PC-3 (cell line): ENCODE measurements at regions of chr16 and their contacts with region 1.

Region 1: GRCh38 chr16:27109666-27110523 is 43.2 kb downstream of the C16orf82 start:
- DNase-seq: peak; percentile 67
- ATAC-seq: peak; percentile 78
- H3K4me3 ChIP-seq: peak overlapping the region; percentile 62
- H3K27ac ChIP-seq: no peak overlapping the region
- H3K4me1 ChIP-seq: no peaks in the 10 kb centered on the region
- H3K27me3 ChIP-seq: no peaks in the 10 kb centered on the region
- CTCF ChIP-seq: peak; percentile 54

Region 2: DNA sequence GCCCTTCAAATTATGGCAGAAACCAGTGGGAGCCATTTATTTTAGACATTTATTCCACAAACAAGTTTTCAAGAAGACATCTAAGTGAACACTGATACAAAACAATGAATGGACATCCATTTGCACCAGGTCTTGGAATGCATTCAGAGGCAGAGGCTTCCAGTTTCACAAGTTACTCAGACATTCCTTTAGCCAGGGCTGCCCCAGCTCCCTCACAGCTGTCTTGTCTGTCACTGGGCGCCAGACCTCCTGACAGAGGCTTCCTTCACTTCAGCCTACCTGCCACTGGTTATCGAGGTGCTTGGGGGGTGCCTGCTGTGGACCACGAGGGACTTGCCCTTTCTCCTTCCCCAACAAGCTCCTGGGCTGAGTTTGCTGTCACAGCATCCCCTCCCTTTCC is 1873.9 kb before region 1 on chr16:
- CTCF ChIA-PET with region 1: interaction called, 10 read pairs
- POLR2A ChIA-PET with region 1: no interaction called
- intact Hi-C with region 1: no loop called
- DNase-seq: no peak
- ATAC-seq: no peak
- H3K4me3 ChIP-seq: no peak overlapping the region
- H3K27ac ChIP-seq: no peak overlapping the region
- H3K4me1 ChIP-seq: no peaks in the 10 kb centered on the region
- H3K27me3 ChIP-seq: no peaks in the 10 kb centered on the region
- CTCF ChIP-seq: no peak

Region 3: GRCh38 chr16:25838724-25839186 is 1271.1 kb before region 1 on chr16:
- CTCF ChIA-PET with region 1: no interaction called
- POLR2A ChIA-PET with region 1: no interaction called
- intact Hi-C with region 1: loop called (anchors 10 kb)
- DNase-seq: peak; percentile 61
- ATAC-seq: no peak
- H3K4me3 ChIP-seq: no peak overlapping the region
- H3K27ac ChIP-seq: no peak overlapping the region
- H3K4me1 ChIP-seq: no peaks in the 10 kb centered on the region
- H3K27me3 ChIP-seq: no peaks in the 10 kb centered on the region
- CTCF ChIP-seq: peak; percentile 72

Region 4: GRCh38 chr16:26709175-26709574 is 400.7 kb before region 1 on chr16:
- CTCF ChIA-PET with region 1: interaction called, 11 read pairs
- POLR2A ChIA-PET with region 1: no interaction called
- intact Hi-C with region 1: no loop called
- DNase-seq: no peak
- ATAC-seq: no peak
- H3K4me3 ChIP-seq: no peak overlapping the region
- H3K27ac ChIP-seq: no peak overlapping the region
- H3K4me1 ChIP-seq: no peaks in the 10 kb centered on the region
- H3K27me3 ChIP-seq: no peaks in the 10 kb centered on the region
- CTCF ChIP-seq: no peak

Region 5: DNA sequence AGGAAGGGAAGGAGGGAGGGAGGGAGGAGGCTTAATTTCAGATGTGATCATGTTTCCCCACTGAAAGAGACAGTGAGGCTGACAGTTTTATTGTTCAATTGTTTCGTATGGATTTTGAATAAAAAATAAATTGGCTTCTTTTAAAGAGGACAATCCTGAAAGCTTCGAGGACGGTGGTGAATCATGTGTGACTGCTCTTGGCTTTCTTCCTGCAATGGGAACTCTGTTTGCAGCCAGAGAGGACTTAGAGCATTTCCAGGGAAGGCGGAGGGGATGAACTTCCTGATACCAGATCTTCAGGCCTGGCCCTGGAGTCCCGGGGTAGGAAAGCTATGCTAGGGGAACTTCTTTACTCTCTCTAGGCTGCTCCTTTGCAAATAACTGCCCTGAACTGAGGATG is 115.9 kb before region 1 on chr16:
- CTCF ChIA-PET with region 1: no interaction called
- POLR2A ChIA-PET with region 1: no interaction called
- intact Hi-C with region 1: no loop called
- DNase-seq: no peak
- ATAC-seq: no peak
- H3K4me3 ChIP-seq: no peak overlapping the region
- H3K27ac ChIP-seq: no peak overlapping the region
- H3K4me1 ChIP-seq: no peaks in the 10 kb centered on the region
- H3K27me3 ChIP-seq: 0 out of 2 replicates have a peak, but pooled peaks cover 6% of the 10 kb centered on the region
- CTCF ChIP-seq: no peak

Region 6: DNA sequence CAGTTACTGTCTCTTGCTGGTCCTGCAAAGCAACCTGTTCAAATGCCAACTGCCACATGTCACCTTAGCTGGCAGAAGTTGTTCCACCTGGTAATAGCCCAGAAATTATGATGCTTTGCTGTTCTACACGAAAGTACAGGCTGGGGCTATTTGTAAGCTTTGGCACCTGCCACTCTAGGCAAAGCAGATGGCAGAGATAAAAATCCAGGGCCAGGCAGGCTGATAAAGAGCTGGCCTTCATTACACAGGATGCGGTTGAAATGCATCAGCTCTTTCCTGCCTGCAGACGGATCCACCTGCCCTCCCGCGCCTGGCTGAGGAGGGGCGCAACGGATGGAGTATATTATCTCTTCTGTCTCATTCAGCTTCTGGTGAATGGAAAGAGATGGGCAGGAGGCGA is 64.1 kb after region 1 on chr16:
- CTCF ChIA-PET with region 1: interaction called, 16 read pairs
- POLR2A ChIA-PET with region 1: no interaction called
- intact Hi-C with region 1: no loop called
- DNase-seq: peak; percentile 67
- ATAC-seq: peak; percentile 44
- H3K4me3 ChIP-seq: no peak overlapping the region
- H3K27ac ChIP-seq: peak overlapping the region; percentile 59
- H3K4me1 ChIP-seq: peaks cover 36% of the 10 kb centered on the region
- H3K27me3 ChIP-seq: no peaks in the 10 kb centered on the region
- CTCF ChIP-seq: no peak

Region 7: GRCh38 chr16:27811881-27812280 is 702.0 kb after region 1 on chr16:
- CTCF ChIA-PET with region 1: no interaction called
- POLR2A ChIA-PET with region 1: no interaction called
- intact Hi-C with region 1: no loop called
- DNase-seq: no peak
- ATAC-seq: no peak
- H3K4me3 ChIP-seq: no peak overlapping the region
- H3K27ac ChIP-seq: no peak overlapping the region
- H3K4me1 ChIP-seq: no peaks in the 10 kb centered on the region
- H3K27me3 ChIP-seq: peaks cover 15% of the 10 kb centered on the region; the same call in 1 of the 2 replicates
- CTCF ChIP-seq: no peak